Right ventricle myocardium inferior (tissue), 1 donor: ENCODE measurements at regions of chr2 and their contacts with region 1.

Region 1: DNA sequence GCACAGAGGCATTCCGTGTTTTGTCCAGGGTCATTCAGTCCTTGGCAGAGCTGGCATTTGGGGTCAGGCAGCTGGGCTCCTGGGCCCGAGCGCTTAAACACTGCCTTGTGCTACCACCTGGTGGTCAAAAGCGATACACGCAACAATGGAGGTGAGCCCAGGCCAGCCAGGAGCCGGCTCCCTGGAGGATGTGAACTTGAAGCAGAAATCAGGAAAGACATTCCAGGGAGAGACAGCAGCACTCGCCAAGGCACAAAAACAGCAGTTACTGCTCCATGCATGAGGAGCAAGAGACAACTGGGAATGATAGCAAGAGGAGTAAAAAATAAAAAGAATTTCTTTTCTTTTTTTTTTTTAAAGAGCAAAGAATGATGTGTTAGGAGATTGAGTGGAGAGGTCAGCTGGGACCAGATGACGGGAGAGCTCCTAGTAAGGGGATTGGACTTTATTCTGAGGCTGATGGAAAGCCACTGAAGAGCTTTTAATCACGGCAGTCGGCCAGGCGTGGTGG is 20.7 kb downstream of the SCYGR8 start:
- DNase-seq: peak; percentile 88
- ATAC-seq: peak; percentile 98

Region 2: GRCh38 chr2:227406177-227407031 is 360.0 kb before region 1 on chr2:
- intact Hi-C with region 1: loop called (anchors 2 kb)
- DNase-seq: no peak
- ATAC-seq: peak; percentile 85

Region 3: DNA sequence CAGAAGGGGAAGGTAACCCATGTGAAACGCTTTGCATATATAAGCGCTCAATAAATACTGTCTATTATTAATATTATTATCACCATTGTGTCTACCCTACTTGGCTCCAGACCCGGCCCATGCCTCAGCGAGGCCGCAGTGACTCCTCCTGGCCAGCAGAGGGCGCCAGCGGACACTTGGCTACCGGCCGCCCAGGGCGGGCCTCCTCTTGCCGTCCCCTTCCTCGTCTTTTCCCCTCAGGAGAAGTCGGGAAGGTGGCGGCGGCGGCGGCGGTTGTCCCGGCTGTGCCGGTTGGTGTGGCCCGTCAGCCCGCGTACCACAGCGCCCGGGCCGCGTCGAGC is 294.5 kb before region 1 on chr2 and contains the start of gene AGFG1:
- intact Hi-C with region 1: loop called (anchors 5 kb)
- DNase-seq: peak; percentile 94
- ATAC-seq: peak; percentile 87
- total RNA-seq, gene AGFG1: 57.8 TPM

Region 4: GRCh38 chr2:227655454-227655853 is 111.0 kb before region 1 on chr2:
- intact Hi-C with region 1: loop called (anchors 1 kb)
- DNase-seq: no peak
- ATAC-seq: peak; percentile 88

Region 5: DNA sequence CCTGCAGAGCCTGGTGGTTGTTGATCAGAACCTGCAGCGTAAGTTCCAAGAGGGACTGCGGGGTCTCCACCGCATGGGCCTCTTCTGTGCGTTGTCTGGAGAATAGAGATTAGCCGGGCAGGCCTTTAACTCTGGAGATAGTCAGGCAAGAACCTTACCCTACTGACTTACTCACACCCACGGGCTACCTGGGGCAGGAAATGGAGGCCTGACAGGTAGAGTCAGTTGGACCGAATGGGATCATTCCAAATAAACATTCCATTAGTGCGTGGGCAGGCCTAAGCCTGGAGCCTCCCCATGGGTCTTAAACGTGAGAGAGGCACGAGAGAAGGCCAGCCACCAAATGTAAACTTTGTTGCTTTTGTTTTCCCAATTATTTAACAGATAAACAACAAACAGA is 22.2 kb before region 1 on chr2:
- intact Hi-C with region 1: no loop called
- DNase-seq: no peak
- ATAC-seq: no peak